CD8-positive, alpha-beta T cell (primary cell): ENCODE measurements at regions of chr19 and their contacts with region 1.

Region 1: GRCh38 chr19:38877781-38878574 is at the start of gene RINL:
- DNase-seq: peak in 8 of 9 experiments; percentile 63 to 85 (median 76)
- ATAC-seq: peak; percentile 94
- H3K4me3 ChIP-seq: peak within 1 kb of the TSS; percentile 52 to 65
- H3K4me3 Mint-ChIP-seq: peak within 1 kb of the TSS; percentile 87
- H3K27ac ChIP-seq: peak within 1 kb of the TSS; percentile 79 to 95
- H3K27ac Mint-ChIP-seq: peak within 1 kb of the TSS; percentile 97
- H3K4me1 ChIP-seq: peaks cover 36% of the 10 kb centered on the region
- H3K4me1 Mint-ChIP-seq: peaks cover 37% of the 10 kb centered on the region
- H3K27me3 ChIP-seq: no peaks in the 10 kb centered on the region
- H3K27me3 Mint-ChIP-seq: no peaks in the 10 kb centered on the region
- CTCF ChIP-seq: no peak
- total RNA-seq, gene RINL: 18.1 to 18.4 TPM

Region 2: GRCh38 chr19:38842439-38843174 is 35.4 kb before region 1 on chr19:
- CTCF ChIA-PET with region 1: interaction called, 7 read pairs
- POLR2A ChIA-PET with region 1: interaction called, 11 read pairs
- intact Hi-C with region 1: no loop called
- DNase-seq: peak; percentile 38 to 88 (median 72)
- ATAC-seq: peak; percentile 79
- H3K4me3 ChIP-seq: peak overlapping the region in 1 of 2 experiments; percentile 34
- H3K4me3 Mint-ChIP-seq: peak overlapping the region; percentile 72
- H3K27ac ChIP-seq: peak overlapping the region; percentile 46 to 56
- H3K27ac Mint-ChIP-seq: peak overlapping the region; percentile 89
- H3K4me1 ChIP-seq: peaks cover 80% of the 10 kb centered on the region
- H3K4me1 Mint-ChIP-seq: peaks cover 76% of the 10 kb centered on the region
- H3K27me3 ChIP-seq: no peaks in the 10 kb centered on the region
- H3K27me3 Mint-ChIP-seq: no peaks in the 10 kb centered on the region
- CTCF ChIP-seq: no peak

Region 3: DNA sequence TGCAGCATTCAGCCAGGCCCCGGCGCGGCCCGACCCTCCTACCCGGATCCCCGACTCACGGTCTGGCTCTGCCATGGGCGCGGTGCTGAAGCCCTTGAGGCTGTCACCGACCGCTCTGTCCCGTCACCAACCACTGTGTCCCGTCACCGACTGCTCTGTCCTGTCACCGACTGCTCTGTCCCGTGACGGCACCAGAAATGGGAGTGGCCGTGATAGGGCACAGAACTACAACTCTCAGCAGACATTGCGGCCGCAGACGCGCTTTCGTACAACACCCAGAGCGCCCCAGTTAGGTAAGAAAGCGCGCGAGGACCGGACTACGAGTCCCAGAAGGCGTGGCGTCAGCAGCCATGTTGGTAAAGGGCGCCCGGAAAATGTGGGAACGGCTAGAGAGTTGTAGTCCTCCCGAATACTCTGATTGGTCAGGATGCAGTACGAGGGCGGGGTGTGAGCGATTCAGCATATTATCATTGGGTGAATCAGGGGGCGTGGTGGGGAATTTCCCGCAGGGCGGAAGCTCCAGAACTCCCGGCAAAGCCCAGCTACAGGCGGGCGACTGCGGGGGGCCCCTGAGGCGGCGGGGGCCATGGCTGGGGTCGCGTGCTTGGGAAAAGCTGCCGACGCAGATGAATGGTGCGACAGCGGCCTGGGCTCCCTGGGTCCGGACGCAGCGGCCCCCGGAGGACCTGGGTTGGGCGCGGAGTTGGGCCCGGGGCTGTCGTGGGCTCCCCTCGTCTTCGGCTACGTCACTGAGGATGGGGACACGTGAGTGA is 21.7 kb after region 1 on chr19 and contains the starts of genes NFKBIB and SIRT2:
- CTCF ChIA-PET with region 1: no interaction called
- POLR2A ChIA-PET with region 1: interaction called, 3 read pairs
- intact Hi-C with region 1: loop called in 1 of 2 experiments (anchors 1 kb)
- DNase-seq: peak; percentile 97 to 100 (median 99)
- ATAC-seq: peak; percentile 85
- H3K4me3 ChIP-seq: peak within 1 kb of the TSS; percentile 68 to 88
- H3K4me3 Mint-ChIP-seq: peak within 1 kb of the TSS; percentile 93
- H3K27ac ChIP-seq: peak within 1 kb of the TSS; percentile 93 to 100
- H3K27ac Mint-ChIP-seq: peak within 1 kb of the TSS; percentile 98
- H3K4me1 ChIP-seq: peaks cover 23% of the 10 kb centered on the region
- H3K4me1 Mint-ChIP-seq: peaks cover 57% of the 10 kb centered on the region
- H3K27me3 ChIP-seq: no peaks in the 10 kb centered on the region
- H3K27me3 Mint-ChIP-seq: no peaks in the 10 kb centered on the region
- CTCF ChIP-seq: no peak
- total RNA-seq, gene NFKBIB: 62.9 to 66.1 TPM
- total RNA-seq, gene SIRT2: 90.6 to 95.1 TPM